ENCODE measurements at regions of chr3 and their contacts with region 1.

Region 1: GRCh38 chr3:29338377-29338776 is 57.5 kb downstream of the RBMS3 start:
- DNase-seq: no peak
- H3K4me3 ChIP-seq: no peak overlapping the region
- H3K27ac ChIP-seq: no peak overlapping the region
- H3K4me1 ChIP-seq: no peaks in the 10 kb centered on the region
- H3K27me3 ChIP-seq: no peaks in the 10 kb centered on the region
- CTCF ChIP-seq: no peak

Region 2: DNA sequence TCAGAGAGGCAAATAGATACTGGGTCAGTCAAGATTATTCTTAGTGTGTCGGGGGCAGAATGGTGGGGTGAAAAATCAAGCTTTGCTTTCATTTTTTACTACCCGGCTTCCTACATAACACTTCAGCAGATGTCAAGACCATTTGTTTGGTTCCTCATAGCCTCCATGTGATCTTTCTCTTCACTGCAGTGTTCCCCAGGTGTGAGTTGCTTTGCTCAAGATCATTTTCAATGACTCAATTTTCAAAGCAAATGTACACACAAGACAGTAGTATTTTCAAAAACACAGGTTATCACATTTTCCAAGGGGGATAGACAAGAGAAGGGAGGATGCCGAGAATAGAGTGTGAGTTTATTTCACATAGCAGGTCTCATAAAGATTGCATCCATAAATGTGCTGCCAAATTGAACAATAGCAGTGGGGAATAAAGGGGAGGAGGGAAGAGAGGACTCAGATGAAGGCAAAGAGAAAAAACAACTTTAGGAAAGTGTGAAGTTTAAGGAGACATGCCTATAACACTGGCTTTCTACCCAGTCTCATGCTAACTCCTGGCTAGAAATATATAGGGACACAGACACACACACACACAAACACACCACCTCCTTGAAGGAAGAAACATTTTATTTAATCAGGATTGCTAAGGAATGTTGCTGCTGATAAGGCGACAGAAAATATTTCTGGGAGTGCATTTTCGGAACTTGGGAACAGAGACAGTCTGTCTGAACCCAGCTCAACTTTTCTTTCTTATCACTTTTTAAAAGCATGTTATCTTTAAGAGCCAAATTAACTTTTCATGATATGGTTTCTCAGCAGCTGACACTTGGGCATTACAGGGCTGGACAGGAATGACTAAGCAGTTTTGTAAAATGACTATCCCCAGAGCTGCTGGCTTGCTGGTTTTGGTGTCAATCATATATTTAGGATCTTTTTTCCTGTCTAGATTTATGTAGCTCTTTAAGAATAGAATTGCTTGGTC is 344.9 kb after region 1 on chr3:
- CTCF ChIA-PET with region 1: no interaction called
- POLR2A ChIA-PET with region 1: interaction called, 10 read pairs
- intact Hi-C with region 1: no loop called
- DNase-seq: peak in 1 of 2 experiments; percentile 17
- H3K4me3 ChIP-seq: no peak overlapping the region
- H3K27ac ChIP-seq: peak overlapping the region; percentile 64
- H3K4me1 ChIP-seq: peaks cover 12% of the 10 kb centered on the region
- H3K27me3 ChIP-seq: no peaks in the 10 kb centered on the region
- CTCF ChIP-seq: no peak